ENCODE measurements at regions of chr13 and their contacts with region 1.

Region 1: GRCh38 chr13:23950736-23951672 is 53.7 kb upstream of the C1QTNF9B start:
- DNase-seq: no peak
- H3K4me3 Mint-ChIP-seq: no peak overlapping the region
- H3K27ac Mint-ChIP-seq: no peak overlapping the region
- H3K4me1 Mint-ChIP-seq: peaks cover 19% of the 10 kb centered on the region
- H3K27me3 Mint-ChIP-seq: peaks cover 5% of the 10 kb centered on the region

Region 2: DNA sequence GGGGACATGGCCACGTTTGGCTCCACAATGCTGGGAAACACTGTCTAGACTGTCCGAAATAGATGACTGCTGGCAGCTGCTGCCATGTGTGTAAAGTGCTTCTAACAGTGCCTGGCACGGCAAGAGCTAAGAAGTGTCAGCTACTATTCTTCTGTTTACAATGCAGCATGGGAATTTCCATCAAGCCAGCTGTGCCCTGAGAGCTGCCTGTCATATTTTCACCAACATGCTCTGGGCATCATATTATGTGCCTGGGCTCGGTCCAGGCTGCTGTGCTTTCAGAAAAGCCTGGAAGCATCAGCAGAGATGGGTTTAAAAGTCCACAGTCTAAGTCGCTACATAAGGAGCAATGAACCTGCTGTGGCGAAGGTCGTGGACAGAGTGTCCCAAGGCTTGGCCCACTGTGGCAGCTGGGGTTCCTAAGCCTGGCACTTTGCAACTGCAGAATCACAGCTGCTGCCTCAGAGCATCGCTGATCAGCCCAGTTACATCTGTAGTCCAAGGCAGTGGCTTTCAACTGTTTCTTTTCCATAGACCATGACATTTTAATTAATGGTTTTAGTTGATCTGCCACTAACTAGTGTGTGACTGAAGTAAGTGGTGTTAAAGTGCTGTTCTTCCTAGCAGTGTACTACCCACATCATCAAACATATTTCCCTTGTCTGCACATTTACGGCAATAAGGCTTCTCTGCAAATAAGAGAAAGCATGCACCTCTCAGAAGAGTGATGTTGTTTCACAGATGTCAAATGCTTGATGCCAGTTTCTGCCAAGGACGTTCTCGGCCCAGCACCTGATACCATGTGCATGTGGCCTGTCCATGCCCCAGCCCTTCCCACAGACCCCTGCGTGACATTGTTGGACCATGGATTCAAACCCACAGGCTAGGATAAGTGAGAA is 42.0 kb after region 1 on chr13:
- intact Hi-C with region 1: loop called (anchors 5 kb)
- DNase-seq: no peak
- H3K4me3 Mint-ChIP-seq: no peak overlapping the region
- H3K27ac Mint-ChIP-seq: no peak overlapping the region
- H3K4me1 Mint-ChIP-seq: peaks cover 6% of the 10 kb centered on the region
- H3K27me3 Mint-ChIP-seq: peaks cover 20% of the 10 kb centered on the region

Region 3: DNA sequence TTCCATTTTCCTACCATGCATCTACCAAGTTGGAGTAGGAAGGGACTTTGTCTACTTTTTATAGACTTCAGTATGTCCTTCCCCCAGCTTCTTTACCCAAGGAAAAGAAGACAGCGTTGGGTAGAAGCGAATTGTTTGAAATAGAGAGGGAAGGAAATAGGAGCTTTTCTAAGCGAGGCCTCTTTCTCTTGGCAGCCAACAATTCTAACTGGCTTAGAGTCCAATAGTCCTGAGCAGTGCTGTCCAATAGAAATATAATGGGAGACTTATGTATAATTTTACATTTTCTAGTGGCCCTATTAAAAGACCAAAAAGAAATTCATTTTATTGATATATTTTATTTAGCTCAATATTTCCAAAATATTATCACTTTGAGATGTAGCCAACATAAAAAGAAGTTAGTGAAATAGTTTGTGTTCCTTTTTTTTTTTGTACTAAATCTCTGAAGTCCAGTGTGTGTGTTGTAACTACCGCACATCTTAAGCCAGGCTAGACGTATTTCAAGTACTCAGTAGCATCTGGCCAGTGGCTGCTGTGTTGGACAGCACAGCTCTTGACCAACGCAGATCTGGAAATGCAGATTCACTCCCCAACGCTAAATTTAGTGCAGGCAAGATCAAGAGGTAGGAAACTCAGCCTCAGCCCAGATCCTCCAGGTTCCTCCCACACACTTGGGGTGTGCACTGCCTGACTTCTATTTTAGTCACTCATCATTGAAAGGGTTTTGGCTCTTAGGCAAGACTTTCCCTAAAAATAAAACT is 1921.7 kb after region 1 on chr13:
- intact Hi-C with region 1: no loop called
- DNase-seq: no peak
- H3K4me3 Mint-ChIP-seq: peak overlapping the region; percentile 27
- H3K27ac Mint-ChIP-seq: peak overlapping the region; percentile 47
- H3K4me1 Mint-ChIP-seq: peaks cover 69% of the 10 kb centered on the region
- H3K27me3 Mint-ChIP-seq: peaks cover 2% of the 10 kb centered on the region